ENCODE measurements at regions of chr19 and their contacts with region 1.

Region 1: DNA sequence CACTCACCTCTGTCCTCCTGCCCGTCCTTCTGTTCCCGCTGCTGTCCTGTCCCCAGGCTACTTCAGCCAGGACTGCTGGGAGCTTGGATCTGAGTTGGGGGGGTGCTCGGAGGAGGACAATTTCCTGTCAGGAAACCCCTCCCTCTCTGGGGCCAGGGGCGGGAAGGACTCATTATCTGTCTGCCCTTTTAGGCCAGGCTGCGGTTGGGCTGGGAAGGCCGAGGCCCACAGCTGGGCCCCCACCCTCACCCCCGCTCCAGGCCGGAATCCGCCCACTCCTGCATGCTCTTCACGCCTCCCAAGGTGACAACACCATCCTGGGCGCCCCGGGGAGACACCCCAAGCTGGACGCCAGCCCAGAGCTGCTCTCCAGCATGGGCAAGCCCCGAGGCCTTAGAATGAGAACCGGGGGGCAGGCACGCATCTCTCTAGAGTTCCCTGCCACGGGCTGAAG is at the start of gene EXOC3L2:
- DNase-seq: peak; percentile 49 to 70
- ATAC-seq: peak; percentile 47 to 86 (median 70)
- H3K4me3 ChIP-seq: peak within 1 kb of the TSS in 8 of 10 donors; percentile 12 to 43 (median 38)
- H3K27ac ChIP-seq: peak within 1 kb of the TSS; percentile 19 to 80 (median 46)
- H3K4me1 ChIP-seq: peaks cover 2 to 41% (median 14%) of the 10 kb centered on the region in 9 donors
- H3K27me3 ChIP-seq: no peaks in the 10 kb centered on the region
- CTCF ChIP-seq: no peak
- total RNA-seq, gene EXOC3L2: 0.27 to 2.0 (median 1.1) TPM

Region 2: DNA sequence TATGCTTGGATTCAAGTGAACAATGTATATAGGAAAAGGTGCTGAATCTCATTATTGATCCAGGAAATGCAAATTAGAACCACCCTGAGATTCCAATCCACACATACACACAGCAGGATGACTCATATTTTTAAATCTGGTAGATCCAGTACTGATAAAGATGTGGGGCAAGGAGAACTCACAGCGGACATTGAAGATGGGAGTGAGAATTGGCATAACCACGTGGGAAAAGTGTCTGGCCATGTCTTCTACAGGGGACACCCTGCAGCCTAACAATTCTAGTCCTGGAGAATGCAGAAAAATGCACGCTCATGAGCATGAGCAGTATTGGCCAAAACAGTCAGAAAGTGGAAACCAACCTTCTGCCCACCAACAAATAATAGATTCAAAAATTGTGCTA is 510.4 kb before region 1 on chr19:
- intact Hi-C with region 1: loop called in 1 of 10 experiments (anchors 5 kb)
- DNase-seq: no peak
- ATAC-seq: no peak
- H3K4me3 ChIP-seq: no peak overlapping the region
- H3K27ac ChIP-seq: no peak overlapping the region
- H3K4me1 ChIP-seq: peaks cover 0 to 46% (median 0%) of the 10 kb centered on the region in 9 donors
- H3K27me3 ChIP-seq: no peaks in the 10 kb centered on the region
- CTCF ChIP-seq: no peak

Region 3: DNA sequence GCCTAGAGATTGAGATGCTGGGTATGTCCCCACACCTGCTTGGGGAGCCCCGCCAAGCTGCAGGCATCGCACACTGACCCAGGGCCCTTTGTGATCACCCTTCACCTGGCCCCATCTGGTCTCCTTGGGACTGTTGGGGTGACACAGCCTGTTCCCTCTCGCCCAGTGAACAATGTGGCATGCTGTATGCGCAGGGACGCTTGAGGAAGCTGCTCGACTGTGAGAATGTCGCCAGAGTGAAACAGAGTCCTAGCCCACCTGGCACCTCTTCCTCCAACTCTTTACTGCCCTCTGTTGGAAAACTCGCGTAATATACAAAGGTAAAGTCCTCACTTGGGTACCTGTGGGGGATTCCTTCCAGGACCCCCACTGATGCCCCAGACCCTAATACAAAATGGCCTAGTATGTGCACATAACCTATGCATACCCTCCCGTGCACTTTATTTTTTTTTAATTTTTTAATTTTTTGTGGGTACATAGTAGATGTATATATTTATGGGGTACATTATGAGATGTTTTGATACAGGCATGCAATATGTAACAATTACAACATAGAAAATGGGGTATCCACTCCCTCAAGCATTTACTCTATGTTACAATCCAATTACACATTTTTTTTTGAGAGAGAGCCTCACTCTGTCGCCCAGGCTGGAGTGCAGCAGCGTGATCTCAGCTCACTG is 57.8 kb before region 1 on chr19:
- intact Hi-C with region 1: loop called in 2 of 10 experiments (anchors 10 kb)
- DNase-seq: no peak
- ATAC-seq: peak in 5 of 8 donors; percentile 23 to 56 (median 32)
- H3K4me3 ChIP-seq: no peak overlapping the region
- H3K27ac ChIP-seq: no peak overlapping the region
- H3K4me1 ChIP-seq: peaks cover 0 to 12% (median 0%) of the 10 kb centered on the region in 9 donors
- H3K27me3 ChIP-seq: no peaks in the 10 kb centered on the region
- CTCF ChIP-seq: peak in 8 of 9 donors; percentile 41 to 67 (median 58)

Region 4: DNA sequence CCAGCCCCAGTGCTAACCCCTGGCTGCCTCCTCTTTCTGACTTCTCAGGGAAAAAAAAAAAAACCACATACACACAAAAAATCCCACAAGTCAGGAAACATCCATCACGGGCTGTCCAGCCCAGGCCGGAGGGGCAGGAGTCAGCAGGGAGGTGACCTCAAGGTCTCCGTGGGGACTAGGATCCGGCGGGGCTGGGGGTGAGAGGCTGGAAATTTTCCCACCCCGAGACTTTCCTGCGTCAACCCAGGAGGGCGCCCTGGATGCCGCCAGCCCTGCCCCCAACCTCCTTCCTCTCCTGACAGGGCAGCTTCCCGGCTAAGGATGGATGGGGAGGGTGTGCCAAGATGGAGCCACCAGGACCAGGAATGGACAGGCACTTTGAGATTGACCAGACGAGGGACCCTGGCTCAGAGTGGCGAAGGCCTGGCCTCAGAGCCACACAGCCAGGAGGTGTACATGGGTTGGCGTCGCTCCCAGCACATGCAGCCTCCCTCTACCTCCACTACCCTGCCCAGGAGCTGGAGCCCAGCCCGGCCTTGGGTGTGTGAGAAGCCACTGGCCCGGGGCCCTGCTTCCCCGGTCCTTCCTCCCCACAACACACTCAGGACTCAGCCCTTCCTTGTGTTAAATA is 33.5 kb before region 1 on chr19:
- intact Hi-C with region 1: loop called in 3 of 10 experiments (anchors 5 kb)
- DNase-seq: peak; percentile 67 to 72
- ATAC-seq: peak; percentile 79 to 93 (median 91)
- H3K4me3 ChIP-seq: peak overlapping the region in 1 of 10 donors; percentile 7
- H3K27ac ChIP-seq: peak overlapping the region in 8 of 10 donors; percentile 39 to 77 (median 66)
- H3K4me1 ChIP-seq: peaks cover 0 to 43% (median 23%) of the 10 kb centered on the region in 9 donors
- H3K27me3 ChIP-seq: peaks cover 0 to 31% (median 21%) of the 10 kb centered on the region in 7 donors
- CTCF ChIP-seq: no peak